CD8-positive, alpha-beta memory T cell (primary cell): ENCODE measurements at regions of chr10 and their contacts with region 1.

Region 1: DNA sequence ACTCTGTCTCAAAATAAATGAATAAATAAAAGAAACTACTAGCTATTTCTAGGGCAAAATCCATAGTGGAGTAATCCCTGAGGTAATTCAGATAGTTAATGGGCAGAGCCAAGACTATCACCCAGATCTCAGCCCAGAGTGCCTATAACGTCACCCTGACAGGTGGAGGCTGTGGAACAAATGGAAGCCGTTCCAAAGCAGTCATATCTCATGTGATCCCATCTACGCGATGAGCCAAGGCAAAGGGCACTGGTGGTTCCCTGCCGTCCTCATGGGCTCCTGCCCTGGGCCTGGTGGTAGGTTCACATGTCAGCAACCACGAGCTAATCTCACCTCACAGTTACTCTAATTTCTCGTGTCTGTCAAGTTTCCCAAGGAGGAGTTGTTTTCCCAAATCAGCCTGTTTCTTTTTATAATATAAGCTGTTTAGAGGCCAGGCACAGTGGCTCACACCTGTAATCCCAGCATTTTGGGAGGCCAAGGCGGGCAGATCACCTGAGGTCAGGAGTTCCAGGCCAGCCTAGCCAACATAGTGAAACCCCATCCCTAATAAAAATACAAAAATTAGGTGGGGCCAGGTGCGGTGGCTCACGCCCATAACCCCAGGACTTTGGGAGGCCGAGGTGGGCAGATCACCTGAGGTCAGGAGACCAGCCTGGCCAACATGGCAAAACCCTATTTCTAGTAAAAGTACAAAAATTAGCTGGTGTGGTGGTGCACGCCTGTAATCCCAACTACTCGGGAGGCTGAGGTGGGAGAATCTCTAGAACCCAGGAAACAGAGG is 22.5 kb upstream of the ASCC1 start:
- DNase-seq: no peak
- H3K4me3 ChIP-seq: no peak overlapping the region
- H3K4me3 Mint-ChIP-seq: no peak overlapping the region
- H3K27ac ChIP-seq: no peak overlapping the region
- H3K27ac Mint-ChIP-seq: peak overlapping the region in 2 of 8 donors; percentile 71 to 89
- H3K4me1 ChIP-seq: peaks cover 15% of the 10 kb centered on the region
- H3K4me1 Mint-ChIP-seq: peaks cover 20 to 38% (median 30%) of the 10 kb centered on the region in 3 donors
- H3K27me3 ChIP-seq: no peaks in the 10 kb centered on the region
- H3K27me3 Mint-ChIP-seq: peaks cover 0 to 2% of the 10 kb centered on the region in 2 donors

Region 2: DNA sequence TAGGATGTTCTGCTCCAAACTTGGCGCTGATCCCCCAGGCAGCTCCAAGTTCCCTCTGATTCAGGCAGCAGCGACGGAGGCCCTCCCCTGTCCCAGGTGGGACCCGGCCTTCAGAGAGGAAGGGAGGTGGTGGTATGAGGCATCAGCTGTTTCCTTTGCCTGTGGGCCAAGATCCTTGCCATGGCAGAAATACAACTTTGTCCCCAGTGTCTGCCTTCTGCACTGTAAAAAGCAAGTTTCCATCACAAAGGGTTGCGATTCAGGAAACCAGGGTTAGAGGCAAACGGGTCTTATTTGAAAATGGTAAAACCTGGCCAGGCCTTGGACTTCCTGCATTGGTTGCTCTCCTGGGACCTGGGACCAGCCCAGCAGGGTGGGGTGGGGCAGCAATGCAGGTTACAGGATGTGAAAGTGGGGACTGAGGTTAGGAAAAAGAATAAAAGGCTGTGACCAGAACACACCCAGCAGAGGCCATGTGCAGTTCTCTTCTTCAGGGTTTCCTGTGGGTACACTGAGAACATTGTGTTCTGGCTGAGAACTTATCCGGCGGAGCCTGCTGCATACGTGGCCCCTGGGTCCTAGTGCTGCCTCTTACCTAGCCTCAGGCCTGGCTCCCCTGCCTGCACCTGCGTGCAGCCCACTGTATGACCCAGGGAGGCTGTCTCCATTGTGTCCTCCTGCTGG is 10.0 kb after region 1 on chr10:
- CTCF ChIA-PET with region 1: interaction called, 13 read pairs
- POLR2A ChIA-PET with region 1: interaction called, 3 read pairs
- DNase-seq: peak; percentile 46 to 89 (median 80)
- H3K4me3 ChIP-seq: peak overlapping the region; percentile 55
- H3K4me3 Mint-ChIP-seq: peak overlapping the region; percentile 68 to 93 (median 84)
- H3K27ac ChIP-seq: peak overlapping the region; percentile 47
- H3K27ac Mint-ChIP-seq: peak overlapping the region; percentile 90 to 98 (median 95)
- H3K4me1 ChIP-seq: peaks cover 94% of the 10 kb centered on the region
- H3K4me1 Mint-ChIP-seq: peaks cover 61 to 88% (median 85%) of the 10 kb centered on the region in 3 donors
- H3K27me3 ChIP-seq: no peaks in the 10 kb centered on the region
- H3K27me3 Mint-ChIP-seq: no peaks in the 10 kb centered on the region